ENCODE measurements at regions of chr6 and their contacts with region 1.

Region 1: GRCh38 chr6:110944681-110945151 is 13.8 kb upstream of the GTF3C6 start:
- DNase-seq: peak; percentile 65

Region 2: DNA sequence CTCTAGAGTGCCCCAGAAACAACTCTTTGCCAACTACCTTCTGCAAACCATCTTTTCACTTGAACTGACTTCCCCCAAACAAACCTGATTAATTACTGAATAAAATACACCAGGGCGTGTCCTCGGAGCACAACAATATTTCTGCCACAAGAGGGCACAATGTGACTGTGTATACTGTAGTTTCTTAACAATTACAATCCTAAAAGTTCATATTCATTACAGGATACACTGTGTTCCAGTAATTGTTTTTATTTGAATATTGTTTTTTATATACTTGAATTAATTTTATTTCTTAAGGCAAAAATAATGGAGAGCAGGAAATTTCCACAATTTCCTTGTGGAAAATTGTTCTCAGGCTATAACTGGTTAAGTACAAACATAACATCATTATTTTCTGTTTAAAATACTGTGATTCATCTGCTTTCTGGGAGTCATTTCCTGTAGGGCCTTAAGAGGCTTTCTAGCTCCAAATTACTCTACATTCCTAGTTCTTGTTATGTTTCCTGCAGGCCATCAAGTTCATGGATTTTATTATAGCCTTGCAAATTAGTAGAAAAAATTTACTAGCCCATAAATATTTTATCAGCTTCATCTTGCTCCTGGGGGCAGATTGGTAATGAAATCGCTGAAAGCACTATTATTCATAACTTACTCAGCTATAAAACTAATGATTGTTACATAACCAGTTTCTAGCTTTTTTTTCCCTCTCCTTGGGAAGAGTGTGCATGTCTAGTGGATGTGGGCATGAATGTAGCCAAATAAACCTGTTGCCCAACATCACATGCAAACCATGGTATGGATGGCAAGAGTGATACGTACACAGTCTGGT is 416.4 kb before region 1 on chr6:
- in situ Hi-C with region 1: loop called (anchors 25 kb)
- DNase-seq: peak; percentile 76

Region 3: DNA sequence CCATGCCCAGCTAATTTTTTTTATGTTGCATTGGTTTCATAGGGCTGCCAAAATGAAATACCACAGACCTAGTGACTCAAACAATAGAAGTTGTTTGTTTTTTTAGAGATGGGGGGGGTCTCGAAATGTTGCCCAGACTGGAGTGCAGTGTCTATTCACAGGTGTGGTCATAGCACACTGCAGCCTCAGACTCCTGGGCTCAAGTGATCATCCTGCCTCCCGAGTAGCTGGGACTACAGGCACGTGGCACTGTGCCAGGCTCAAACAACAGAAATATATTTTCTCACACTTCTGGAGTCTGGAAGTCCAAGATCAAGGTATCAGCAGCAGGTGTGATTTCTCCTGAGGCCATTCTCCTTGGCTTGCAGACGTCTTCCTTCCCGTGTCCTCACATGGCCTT is 136.0 kb after region 1 on chr6:
- in situ Hi-C with region 1: no loop called
- DNase-seq: no peak

Measured in KBM-7 (cell line).